Activated T-helper 2 cell treated with anti-CD3 and anti-CD28 coated beads, Interferon-gamma antibody, Interleukin-2, Interleukin-4, amounts not matched to agents 10 μg/mL and 5 μg/mL and 100 μg/mL, durations not matched to agents 14 hours and 24 hours and 36 hours (primary cell): ENCODE measurements at regions of chr1 and their contacts with region 1.

Region 1: DNA sequence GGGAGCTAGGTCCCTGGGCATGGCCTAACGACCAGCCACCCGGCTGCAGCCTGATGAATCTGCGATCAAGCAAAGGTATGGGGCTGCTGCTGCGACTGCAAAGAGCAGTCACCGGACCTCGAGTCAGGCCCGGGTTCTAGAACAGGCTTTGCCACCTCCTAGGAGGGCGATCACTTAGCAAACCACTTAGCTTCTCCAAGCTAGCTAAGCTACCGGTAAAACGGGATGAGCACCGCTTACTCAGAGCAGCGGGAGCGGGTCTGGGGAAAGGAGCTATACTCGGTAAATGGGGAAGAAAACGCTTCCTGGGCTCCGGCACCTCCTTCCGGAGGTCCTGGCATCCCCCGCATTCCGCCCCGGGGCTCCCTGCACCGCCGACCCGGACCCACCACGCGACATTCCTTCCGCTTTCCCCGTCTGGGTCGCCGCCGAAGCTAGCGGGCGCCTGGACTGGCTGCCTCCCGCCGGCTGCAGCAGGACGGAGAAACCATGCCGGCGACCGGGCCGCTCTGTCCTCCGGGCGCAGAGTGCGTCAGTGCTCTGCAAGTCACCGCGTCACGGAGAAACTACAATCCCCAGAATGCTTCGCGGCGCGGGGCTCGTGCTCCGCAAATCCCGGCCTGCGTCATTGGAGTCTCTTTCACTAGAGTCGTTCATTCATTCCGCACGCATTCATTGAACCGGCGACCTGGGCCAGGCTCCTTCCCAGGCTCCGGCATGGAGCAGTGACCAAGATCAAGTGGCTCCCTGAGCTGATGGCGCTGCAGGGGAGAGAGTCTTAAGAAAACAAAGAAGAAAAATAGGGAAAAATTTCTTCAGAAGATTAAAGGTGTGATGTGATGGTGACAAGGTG is at the start of gene LSM10:
- DNase-seq: peak; percentile 86
- H3K4me3 Mint-ChIP-seq: peak within 1 kb of the TSS; percentile 99
- H3K27ac Mint-ChIP-seq: peak within 1 kb of the TSS; percentile 100
- H3K4me1 Mint-ChIP-seq: peaks cover 19% of the 10 kb centered on the region
- H3K27me3 Mint-ChIP-seq: no peaks in the 10 kb centered on the region
- total RNA-seq, gene LSM10: 48.4 and 55.3 TPM in 2 replicates

Region 2: GRCh38 chr1:36385410-36386257 is 12.0 kb before region 1 on chr1 and contains the start of gene STK40:
- intact Hi-C with region 1: loop called (anchors 1 kb)
- DNase-seq: peak; percentile 97
- H3K4me3 Mint-ChIP-seq: peak within 1 kb of the TSS; percentile 91
- H3K27ac Mint-ChIP-seq: peak within 1 kb of the TSS; percentile 94
- H3K4me1 Mint-ChIP-seq: peaks cover 37% of the 10 kb centered on the region
- H3K27me3 Mint-ChIP-seq: no peaks in the 10 kb centered on the region
- total RNA-seq, gene STK40: 41.3 and 42.4 TPM in 2 replicates

Region 3: GRCh38 chr1:36463803-36464604 is 66.4 kb after region 1 on chr1 and contains the start of gene MRPS15:
- intact Hi-C with region 1: loop called (anchors 5 kb)
- DNase-seq: peak; percentile 93
- H3K4me3 Mint-ChIP-seq: peak within 1 kb of the TSS; percentile 99
- H3K27ac Mint-ChIP-seq: peak within 1 kb of the TSS; percentile 95
- H3K4me1 Mint-ChIP-seq: peaks cover 24% of the 10 kb centered on the region
- H3K27me3 Mint-ChIP-seq: no peaks in the 10 kb centered on the region
- total RNA-seq, gene MRPS15: 117 and 123 TPM in 2 replicates

Region 4: DNA sequence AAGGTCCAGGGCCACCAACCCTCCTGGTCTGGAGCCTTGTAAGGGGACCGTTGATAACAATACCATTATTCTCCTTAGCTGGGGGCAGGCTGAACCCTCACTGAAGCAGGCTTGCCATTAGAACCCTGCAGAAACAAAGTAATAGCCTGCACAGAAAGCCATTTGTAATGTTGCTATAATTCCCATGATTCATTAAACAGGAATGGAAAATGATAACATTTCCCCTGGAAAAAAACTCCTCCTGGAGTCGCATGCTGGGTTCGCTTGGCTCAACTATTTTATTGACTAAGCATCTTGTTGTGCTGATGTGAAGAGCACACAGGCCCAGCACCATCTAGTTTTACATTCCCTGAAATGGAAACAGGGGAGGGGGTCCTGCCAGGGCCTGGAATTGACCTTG is 240.7 kb after region 1 on chr1:
- intact Hi-C with region 1: no loop called
- DNase-seq: no peak
- H3K4me3 Mint-ChIP-seq: no peak overlapping the region
- H3K27ac Mint-ChIP-seq: no peak overlapping the region
- H3K4me1 Mint-ChIP-seq: no peaks in the 10 kb centered on the region
- H3K27me3 Mint-ChIP-seq: peaks cover 3% of the 10 kb centered on the region